Activated T-helper 1 cell treated with anti-CD3 and anti-CD28 coated beads, Interleukin-12 subunit alpha, Interleukin-12 subunit beta, Interleukin-2, Interleukin-4 antibody, amounts not matched to agents 30 ng/mL and 10 ng/mL and 1 ng/mL, durations not matched to agents 14 hours and 24 hours and 36 hours (primary cell): ENCODE measurements at regions of chr4 and their contacts with region 1.

Region 1: GRCh38 chr4:88672987-88673386 is 24.6 kb downstream of the NAP1L5 start:
- DNase-seq: no peak
- H3K4me3 Mint-ChIP-seq: no peak overlapping the region
- H3K27ac Mint-ChIP-seq: no peak overlapping the region
- H3K4me1 Mint-ChIP-seq: no peaks in the 10 kb centered on the region
- H3K27me3 Mint-ChIP-seq: no peaks in the 10 kb centered on the region

Region 2: GRCh38 chr4:89024051-89024675 is 351.2 kb after region 1 on chr4:
- intact Hi-C with region 1: loop called (anchors 5 kb)
- DNase-seq: peak; percentile 42
- H3K4me3 Mint-ChIP-seq: no peak overlapping the region
- H3K27ac Mint-ChIP-seq: no peak overlapping the region
- H3K4me1 Mint-ChIP-seq: no peaks in the 10 kb centered on the region
- H3K27me3 Mint-ChIP-seq: peaks cover 5% of the 10 kb centered on the region